ENCODE measurements at regions of chr14 and their contacts with region 1.

Region 1: DNA sequence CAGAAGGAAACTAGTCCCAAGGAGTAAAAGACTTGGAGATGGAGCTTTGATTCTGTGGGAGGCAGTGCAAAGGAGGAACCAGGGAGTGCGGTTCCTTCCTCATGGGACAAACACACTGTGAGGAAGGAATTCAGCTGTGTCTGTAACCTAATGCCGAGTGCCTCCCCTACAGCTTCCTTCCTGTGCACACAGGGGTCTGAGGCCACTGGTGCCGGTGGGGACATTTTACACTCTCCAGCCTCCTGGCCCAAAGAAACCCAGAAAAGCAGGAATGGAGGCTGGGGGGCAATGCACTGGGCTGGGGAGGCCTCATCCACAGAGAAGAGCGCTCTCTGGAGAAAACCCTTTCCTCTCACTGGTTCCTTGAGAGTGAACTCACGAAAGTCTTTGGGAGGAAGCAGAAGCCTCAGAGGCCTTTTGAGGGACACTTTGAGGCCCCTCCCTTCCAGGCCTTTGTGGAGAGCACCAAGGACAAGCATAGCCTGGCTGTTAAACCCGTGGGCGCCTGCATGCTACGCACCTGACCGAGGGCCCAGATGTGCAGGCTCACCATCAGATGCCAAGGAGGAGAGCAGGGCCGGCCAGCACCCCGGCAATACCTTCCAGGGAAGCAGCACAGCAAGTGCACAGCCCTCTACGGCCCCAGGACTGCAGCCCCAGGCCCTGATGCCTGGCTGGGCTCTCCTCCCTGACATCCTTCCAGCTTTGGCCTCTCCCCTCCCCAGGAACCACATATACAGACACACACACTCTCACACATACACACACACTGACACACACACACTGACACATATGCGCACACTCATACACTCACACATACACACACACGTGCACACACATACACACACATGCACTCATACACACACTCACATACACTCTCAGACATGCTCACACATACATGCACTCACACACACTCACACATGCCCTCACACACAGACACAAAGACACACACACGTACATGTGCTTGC is 52.0 kb downstream of the NFKBIA start:
- DNase-seq: no peak
- H3K4me3 Mint-ChIP-seq: no peak overlapping the region
- H3K27ac Mint-ChIP-seq: peak overlapping the region; percentile 38
- H3K4me1 Mint-ChIP-seq: peaks cover 30% of the 10 kb centered on the region
- H3K27me3 Mint-ChIP-seq: no peaks in the 10 kb centered on the region

Region 2: GRCh38 chr14:35320472-35320871 is 32.1 kb before region 1 on chr14:
- CTCF ChIA-PET with region 1: no interaction called
- POLR2A ChIA-PET with region 1: no interaction called
- DNase-seq: no peak
- H3K4me3 Mint-ChIP-seq: no peak overlapping the region
- H3K27ac Mint-ChIP-seq: peak overlapping the region; percentile 9
- H3K4me1 Mint-ChIP-seq: peaks cover 9% of the 10 kb centered on the region
- H3K27me3 Mint-ChIP-seq: no peaks in the 10 kb centered on the region

Region 3: DNA sequence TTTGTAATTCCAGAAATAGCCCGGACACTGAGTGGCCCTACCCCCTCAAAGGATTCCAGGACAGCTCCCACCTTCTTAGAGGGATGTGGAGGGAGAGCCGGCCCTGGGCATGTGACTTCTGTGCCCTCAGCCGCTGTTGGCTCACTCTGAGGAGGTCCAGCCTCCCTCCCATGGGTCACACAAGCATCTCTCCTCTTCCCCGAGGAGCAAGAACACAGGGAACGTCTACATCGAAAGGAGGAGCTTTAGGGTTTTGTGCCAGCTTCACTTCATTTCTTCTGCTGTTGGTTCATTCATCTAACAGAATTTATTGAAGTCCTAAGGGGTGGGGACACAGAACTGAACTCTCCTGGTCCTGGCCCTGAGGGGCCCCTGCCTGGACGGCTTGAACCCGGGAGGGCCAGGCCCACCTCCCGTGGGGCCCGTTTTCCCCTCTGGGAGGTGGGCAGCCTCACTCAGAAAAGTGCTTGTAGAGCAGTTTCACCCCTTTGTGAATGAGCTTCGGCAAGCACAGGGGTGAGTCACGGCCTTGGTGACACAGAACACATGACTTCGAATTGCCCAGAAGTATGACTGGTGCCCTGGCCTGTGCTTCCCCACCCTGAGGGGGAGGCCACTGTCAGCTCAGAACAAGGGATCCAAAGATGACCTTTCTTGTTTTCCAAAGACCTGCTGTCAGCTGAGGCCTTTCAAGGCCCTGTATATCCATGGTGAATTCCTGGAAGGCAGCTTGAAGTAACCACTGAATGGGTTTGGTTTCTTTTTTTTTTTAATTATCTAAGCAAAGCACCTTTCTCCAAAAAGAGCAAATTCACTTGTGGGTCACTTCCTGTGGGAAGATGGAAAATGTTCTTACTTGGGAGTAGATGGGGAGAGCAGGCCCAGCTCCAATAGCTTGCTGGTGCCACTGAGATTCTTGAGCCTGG is 12.8 kb after region 1 on chr14:
- CTCF ChIA-PET with region 1: interaction called, 10 read pairs
- POLR2A ChIA-PET with region 1: no interaction called
- DNase-seq: peak; percentile 31
- H3K4me3 Mint-ChIP-seq: no peak overlapping the region
- H3K27ac Mint-ChIP-seq: peak overlapping the region; percentile 38
- H3K4me1 Mint-ChIP-seq: peaks cover 30% of the 10 kb centered on the region
- H3K27me3 Mint-ChIP-seq: no peaks in the 10 kb centered on the region

Region 4: GRCh38 chr14:35492569-35493014 is 140.0 kb after region 1 on chr14:
- CTCF ChIA-PET with region 1: no interaction called
- POLR2A ChIA-PET with region 1: no interaction called
- DNase-seq: no peak
- H3K4me3 Mint-ChIP-seq: no peak overlapping the region
- H3K27ac Mint-ChIP-seq: no peak overlapping the region
- H3K4me1 Mint-ChIP-seq: no peaks in the 10 kb centered on the region
- H3K27me3 Mint-ChIP-seq: peaks cover 5% of the 10 kb centered on the region